WTC11 (cell line): ENCODE measurements at regions of chr3 and their contacts with region 1.

Region 1: GRCh38 chr3:185659942-185660921 is 74.1 kb downstream of the SENP2 start:
- DNase-seq: peak; percentile 88
- ATAC-seq: peak; percentile 90
- H3K4me3 Mint-ChIP-seq: no peak overlapping the region
- H3K27ac Mint-ChIP-seq: no peak overlapping the region; the same call in 1 of the 2 replicates
- H3K4me1 Mint-ChIP-seq: peaks cover 12% of the 10 kb centered on the region
- H3K27me3 Mint-ChIP-seq: no peaks in the 10 kb centered on the region; the same call in 1 of the 2 replicates
- CTCF ChIP-seq: peak; percentile 99

Region 2: DNA sequence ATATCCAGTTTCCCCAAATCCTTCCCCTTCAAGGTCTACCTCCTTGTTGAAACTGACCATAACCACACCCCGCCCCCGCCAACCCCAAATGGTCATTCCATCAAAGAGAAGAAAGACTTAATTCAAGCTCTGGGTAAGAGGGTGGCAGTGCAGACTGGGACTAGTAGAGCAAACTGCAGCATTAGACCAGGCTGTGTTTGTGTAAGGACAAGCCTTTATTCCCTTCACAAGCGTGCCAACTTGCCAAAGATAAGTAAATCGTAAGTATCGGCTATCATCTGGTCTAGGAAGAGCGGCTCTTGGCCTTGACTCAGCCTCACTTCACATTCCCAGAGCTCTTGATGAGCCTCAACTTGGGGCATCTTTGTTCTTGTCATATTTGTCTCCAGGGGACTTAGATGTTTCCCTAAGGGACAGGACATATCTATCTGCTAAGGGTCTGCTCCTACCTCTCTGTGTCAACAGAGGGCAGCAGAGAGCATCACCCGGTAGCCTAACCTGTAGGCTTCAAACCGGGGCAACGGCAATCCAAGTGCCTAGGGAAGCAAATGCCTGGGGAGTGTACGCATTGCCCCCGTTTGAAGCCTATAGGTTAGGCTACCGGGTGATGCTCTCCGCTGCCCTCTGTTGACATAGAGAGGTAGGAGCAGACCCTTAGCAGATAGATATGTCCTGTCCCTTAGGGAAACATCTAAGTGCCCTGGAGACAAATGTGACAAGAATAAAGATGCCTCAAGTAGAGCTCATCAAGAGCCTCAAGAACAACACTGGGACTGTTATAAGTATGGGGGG is 306.2 kb before region 1 on chr3:
- CTCF ChIA-PET with region 1: no interaction called
- POLR2A ChIA-PET with region 1: no interaction called
- DNase-seq: peak; percentile 93
- ATAC-seq: peak; percentile 100
- H3K4me3 Mint-ChIP-seq: no peak overlapping the region
- H3K27ac Mint-ChIP-seq: no peak overlapping the region
- H3K4me1 Mint-ChIP-seq: no peaks in the 10 kb centered on the region
- H3K27me3 Mint-ChIP-seq: peaks cover 82% of the 10 kb centered on the region
- CTCF ChIP-seq: peak; percentile 70

Region 3: GRCh38 chr3:185639632-185640206 is 20.5 kb before region 1 on chr3:
- CTCF ChIA-PET with region 1: interaction called, 27 read pairs
- POLR2A ChIA-PET with region 1: no interaction called
- DNase-seq: no peak
- ATAC-seq: no peak
- H3K4me3 Mint-ChIP-seq: no peak overlapping the region
- H3K27ac Mint-ChIP-seq: no peak overlapping the region
- H3K4me1 Mint-ChIP-seq: peaks cover 11% of the 10 kb centered on the region
- H3K27me3 Mint-ChIP-seq: peaks cover 4% of the 10 kb centered on the region; the same call in 1 of the 2 replicates
- CTCF ChIP-seq: no peak

Region 4: DNA sequence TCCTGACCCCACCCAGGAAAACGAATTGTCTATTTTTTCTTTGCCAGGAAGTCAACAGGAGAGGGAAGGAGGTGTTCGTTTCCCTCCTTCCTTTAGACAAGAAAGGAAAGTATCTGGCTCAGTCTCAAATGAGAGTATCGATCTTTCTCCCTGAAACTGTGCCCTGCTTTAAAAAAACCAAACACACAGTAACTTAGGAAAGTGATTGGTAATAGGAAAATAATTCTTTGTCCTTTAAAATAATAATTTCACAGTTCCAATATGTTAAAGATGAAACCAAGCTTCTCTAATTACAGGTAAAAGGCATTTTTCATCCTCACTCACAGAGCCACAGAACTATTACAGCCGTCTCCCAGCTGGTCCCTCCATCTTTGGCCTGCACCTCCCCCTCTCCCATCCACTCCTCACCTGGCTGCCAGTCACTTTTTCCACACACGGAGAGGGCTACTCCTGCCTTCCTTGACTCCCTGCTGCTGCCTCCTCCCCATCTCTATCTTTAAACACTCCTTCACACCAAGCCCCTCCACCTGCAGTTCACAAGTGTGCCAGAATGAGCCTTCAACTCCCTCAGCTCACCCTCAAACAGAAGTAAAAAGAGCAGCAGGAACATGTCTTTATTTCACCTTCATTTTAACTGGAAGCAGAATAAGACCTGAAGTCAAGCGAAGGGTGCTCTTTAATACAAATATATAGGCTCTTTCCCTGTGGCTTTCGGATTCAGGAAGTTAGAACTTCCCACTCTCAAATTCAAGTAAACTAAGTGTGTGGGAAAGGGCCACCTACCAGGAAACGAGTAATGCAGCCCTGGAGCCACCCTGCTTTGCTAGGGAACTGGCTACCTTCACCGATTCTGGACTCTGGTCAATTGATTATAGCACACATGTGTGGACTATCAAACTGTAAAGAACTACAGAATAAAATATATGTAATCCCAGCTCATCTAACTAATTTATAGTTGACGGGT is 42.3 kb after region 1 on chr3:
- CTCF ChIA-PET with region 1: interaction called, 22 read pairs
- POLR2A ChIA-PET with region 1: interaction called, 3 read pairs
- DNase-seq: no peak
- ATAC-seq: peak; percentile 76
- H3K4me3 Mint-ChIP-seq: peak overlapping the region; percentile 12
- H3K27ac Mint-ChIP-seq: peak overlapping the region; percentile 89
- H3K4me1 Mint-ChIP-seq: peaks cover 37% of the 10 kb centered on the region
- H3K27me3 Mint-ChIP-seq: no peaks in the 10 kb centered on the region
- CTCF ChIP-seq: no peak

Region 5: DNA sequence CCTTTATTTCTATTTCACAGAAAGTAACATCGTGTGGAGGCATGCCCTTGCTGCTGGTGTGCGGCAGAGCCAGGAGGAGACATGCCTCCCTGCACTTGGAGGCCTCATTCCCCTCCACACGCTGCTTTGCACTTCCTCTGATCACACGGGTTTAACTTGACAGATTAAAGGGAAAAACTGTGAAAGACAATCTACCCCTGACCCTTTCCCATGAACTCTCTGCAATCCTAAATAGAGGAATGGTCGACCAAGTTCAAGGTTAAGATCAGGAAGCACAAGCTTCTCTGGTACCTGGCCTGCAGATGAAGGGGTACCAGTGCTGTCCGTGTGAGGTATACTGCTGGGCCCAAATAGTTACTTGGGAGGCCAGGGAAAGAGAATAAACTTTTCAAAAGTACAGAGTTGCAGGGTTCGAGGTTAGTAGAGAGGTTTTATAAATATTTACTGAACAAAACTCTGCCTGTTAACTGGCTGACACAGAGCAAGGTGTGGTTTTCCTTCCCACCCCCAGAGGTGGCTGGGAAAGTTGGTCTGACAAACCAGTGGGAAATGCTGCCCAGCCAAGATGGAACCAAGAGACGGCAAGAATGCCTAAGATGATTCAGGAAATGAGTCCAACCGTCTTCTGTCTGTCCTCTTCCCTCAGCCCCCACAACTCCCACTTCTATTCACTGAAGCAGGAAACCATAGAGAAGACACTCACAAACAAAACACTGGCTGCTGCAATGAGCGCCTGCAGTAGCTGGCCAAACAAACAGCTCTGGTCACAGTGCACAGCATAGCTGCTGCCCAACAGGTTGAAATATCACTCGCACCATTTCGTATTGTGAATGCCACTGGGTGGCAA is 85.0 kb after region 1 on chr3:
- CTCF ChIA-PET with region 1: interaction called, 14 read pairs
- POLR2A ChIA-PET with region 1: no interaction called
- DNase-seq: no peak
- ATAC-seq: peak; percentile 39
- H3K4me3 Mint-ChIP-seq: no peak overlapping the region
- H3K27ac Mint-ChIP-seq: peak overlapping the region; percentile 39
- H3K4me1 Mint-ChIP-seq: peaks cover 65% of the 10 kb centered on the region
- H3K27me3 Mint-ChIP-seq: no peaks in the 10 kb centered on the region
- CTCF ChIP-seq: no peak

Region 6: DNA sequence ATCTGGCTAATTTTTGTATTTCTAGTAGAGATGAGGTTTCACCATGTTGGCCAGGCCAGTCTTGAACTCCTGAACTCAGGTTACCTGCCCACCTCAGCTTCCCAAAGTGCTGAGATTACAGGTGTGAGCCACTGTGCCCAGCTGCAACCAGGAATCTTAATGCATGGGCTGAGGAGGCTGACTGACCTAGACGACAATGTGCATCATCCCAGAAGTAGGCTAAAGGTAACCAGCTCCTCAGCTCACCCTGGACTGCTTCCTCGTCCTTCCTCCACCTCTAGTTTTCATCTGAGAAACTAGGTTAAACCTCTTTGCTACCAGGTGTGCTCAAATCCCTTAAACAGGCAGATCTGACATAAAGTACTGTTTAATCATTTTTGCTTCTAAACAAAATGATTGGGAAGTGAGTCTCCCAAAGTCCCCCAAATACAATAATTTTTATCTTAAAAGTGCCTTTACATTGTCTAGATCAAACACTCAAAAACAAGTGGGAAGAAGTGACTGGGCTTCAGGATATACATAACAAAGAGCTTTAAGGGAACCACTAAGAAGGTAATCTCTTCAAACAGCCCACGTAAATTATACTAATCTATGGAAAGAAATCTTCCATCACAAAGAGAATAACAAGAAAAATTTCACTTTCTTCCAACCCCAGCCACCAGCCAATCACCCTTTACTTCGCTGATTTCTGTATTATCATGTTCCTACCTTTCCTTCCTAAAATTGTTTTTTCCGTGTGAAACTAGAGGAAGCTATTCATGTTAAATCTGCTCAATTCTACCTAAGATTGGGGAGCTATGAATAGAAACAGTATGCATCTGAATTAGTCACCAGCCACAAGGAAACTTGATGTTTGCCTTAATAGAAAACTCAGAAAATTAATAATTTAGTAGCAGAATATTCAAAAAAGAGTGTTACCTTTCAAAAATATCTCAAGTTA is 129.9 kb after region 1 on chr3:
- CTCF ChIA-PET with region 1: interaction called, 15 read pairs
- POLR2A ChIA-PET with region 1: interaction called, 3 read pairs
- DNase-seq: no peak
- ATAC-seq: peak; percentile 15; the same call in 1 of the 2 replicates
- H3K4me3 Mint-ChIP-seq: peak overlapping the region; percentile 27
- H3K27ac Mint-ChIP-seq: peak overlapping the region; percentile 95
- H3K4me1 Mint-ChIP-seq: peaks cover 84% of the 10 kb centered on the region
- H3K27me3 Mint-ChIP-seq: no peaks in the 10 kb centered on the region
- CTCF ChIP-seq: no peak

Region 7: DNA sequence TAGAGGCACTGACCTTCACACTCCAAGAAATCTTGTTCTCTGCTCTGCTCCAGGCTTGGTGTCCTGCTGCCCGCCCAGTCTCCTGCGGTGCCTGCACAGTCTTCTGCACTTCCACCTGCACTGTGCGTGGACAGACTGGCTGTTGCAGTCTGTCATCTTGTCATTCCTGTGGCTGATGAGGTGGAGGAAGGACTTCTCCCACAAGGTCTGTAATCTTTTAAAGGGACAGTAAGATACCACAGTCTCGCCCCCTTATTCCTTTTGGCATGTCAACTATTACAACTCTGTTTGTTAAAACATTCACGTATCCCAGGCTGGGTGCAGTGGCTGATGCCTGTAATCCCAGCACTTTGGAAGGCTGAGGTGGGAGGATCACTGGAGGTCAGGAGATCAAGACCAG is 218.7 kb after region 1 on chr3:
- CTCF ChIA-PET with region 1: interaction called, 11 read pairs
- POLR2A ChIA-PET with region 1: no interaction called
- DNase-seq: no peak
- ATAC-seq: no peak
- H3K4me3 Mint-ChIP-seq: no peak overlapping the region
- H3K27ac Mint-ChIP-seq: no peak overlapping the region
- H3K4me1 Mint-ChIP-seq: peaks cover 14% of the 10 kb centered on the region
- H3K27me3 Mint-ChIP-seq: no peaks in the 10 kb centered on the region
- CTCF ChIP-seq: no peak

Region 8: DNA sequence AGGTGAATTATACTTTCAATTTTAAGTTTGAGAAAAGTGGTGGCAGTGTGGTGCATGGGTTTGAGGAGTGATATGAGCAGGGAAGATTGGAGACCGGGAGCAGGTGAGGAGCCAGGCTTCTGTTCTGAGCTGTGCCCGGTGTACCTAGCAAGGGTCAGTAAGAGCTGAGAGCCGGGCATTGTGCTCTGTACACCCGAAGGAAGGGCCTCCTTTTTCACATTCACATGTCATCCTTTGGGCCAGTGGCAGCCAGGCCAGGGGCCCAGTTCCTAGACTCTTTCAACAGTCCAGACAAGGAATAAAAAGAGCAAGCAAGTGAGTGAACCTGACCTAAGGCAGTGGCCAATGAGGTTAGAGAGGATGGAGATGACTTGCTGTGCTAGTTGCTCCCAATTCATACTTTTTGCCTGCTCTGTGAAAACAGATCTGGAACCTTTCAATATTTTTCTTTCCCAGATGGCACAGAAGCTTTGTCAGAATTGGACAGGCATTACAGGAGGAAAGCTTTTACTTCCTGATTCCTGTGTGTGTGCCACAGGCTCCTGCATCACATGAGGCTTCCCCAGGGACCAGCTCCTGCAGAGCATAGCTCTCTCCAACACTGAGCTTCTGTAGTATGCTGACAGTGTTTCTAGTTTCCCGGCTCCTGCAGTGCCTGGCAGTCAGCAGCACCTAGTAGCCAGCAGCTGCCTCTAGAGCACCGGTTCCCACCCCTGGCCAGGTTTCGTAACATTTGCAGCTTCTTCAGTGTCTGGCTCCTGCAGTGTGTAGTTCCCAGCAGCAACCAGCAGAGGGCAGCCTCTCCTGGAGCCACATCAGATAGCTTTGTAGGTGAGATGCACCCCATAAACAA is 282.9 kb after region 1 on chr3:
- CTCF ChIA-PET with region 1: interaction called, 39 read pairs
- POLR2A ChIA-PET with region 1: interaction called, 5 read pairs
- DNase-seq: peak; percentile 90
- ATAC-seq: peak; percentile 99
- H3K4me3 Mint-ChIP-seq: no peak overlapping the region
- H3K27ac Mint-ChIP-seq: peak overlapping the region; percentile 16; the same call in 1 of the 2 replicates
- H3K4me1 Mint-ChIP-seq: peaks cover 7% of the 10 kb centered on the region
- H3K27me3 Mint-ChIP-seq: peaks cover 11% of the 10 kb centered on the region
- CTCF ChIP-seq: peak; percentile 98